ENCODE measurements at regions of chr12 and their contacts with region 1.

Region 1: GRCh38 chr12:19311165-19311564 is 128.1 kb upstream of the AEBP2 start:
- DNase-seq: no peak
- H3K4me3 Mint-ChIP-seq: no peak overlapping the region
- H3K27ac Mint-ChIP-seq: no peak overlapping the region
- H3K4me1 Mint-ChIP-seq: peaks cover 3% of the 10 kb centered on the region
- H3K27me3 Mint-ChIP-seq: no peaks in the 10 kb centered on the region
- CTCF ChIP-seq: no peak

Region 2: DNA sequence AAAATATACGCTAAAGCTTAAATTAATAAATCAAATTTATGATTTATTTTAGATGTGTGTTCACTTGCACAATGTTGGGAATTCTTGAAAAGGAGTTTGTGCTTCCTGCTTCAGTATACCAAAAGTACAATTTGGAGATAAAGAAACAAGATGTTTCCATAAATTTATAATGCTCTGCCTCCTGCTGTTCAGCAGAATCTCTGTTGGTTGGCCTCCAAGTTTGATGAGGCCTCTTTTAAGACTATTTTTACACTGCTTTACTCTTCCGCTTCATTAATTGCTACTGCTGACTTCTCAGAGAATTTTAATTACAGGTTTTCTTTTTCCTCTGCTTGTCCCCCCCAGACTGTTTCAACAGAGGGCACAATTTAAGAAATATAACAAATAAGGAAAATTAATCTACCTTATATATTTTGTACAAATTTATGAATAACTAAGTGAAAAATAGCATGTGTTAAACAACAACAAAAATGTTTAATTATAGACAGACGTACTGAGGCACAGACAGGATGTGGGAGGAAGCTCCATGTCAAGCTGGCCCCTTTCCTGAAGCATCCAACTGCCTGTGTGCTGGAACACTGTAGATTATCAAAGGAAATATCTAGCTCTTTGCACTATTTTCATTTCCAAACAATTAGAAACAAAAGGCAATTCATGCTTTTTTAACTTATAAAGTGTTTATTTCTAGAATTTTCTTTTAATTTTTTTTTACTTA is 966.0 kb before region 1 on chr12:
- CTCF ChIA-PET with region 1: no interaction called
- POLR2A ChIA-PET with region 1: no interaction called
- intact Hi-C with region 1: no loop called
- DNase-seq: no peak
- H3K4me3 Mint-ChIP-seq: no peak overlapping the region
- H3K27ac Mint-ChIP-seq: no peak overlapping the region
- H3K4me1 Mint-ChIP-seq: peaks cover 6% of the 10 kb centered on the region
- H3K27me3 Mint-ChIP-seq: no peaks in the 10 kb centered on the region
- CTCF ChIP-seq: no peak

Region 3: DNA sequence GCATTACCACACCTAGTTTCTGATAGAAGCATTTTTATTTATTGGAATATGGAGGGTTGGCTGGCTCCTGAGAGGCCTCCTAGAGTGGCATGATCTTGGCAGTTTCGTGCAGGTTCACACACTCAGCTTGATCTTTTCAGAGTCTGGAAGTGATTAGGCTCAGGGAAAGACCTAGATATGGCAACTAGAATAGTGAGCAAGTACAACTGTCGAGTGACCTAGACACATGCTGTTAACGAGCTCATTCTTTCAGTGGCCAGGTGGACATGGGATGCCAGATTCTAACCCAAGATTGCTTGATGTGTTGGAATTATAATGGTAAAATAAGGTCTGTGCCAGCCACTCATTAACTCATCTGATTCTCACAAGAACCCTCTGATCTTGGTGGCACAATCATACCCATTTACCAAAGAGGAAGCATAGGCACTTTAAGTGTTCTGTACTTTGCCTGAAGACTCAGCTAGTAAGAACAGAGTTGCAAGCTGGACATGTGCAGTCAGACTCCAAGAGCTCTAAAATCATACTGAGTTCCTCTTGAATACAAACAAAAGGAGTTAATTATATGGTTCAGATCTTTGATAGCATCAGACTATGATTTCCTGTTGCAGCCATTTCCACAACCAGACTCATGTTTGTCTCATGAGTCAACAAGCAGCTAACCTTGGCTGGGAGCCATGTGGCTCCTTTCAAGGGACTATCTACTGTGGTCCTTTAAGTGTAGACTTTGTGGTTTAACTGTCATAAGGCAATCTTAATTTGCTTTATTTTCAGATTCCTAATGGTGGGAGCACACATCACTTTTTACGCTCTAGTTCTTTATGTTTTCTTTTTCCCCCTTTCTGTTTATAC is 37.5 kb before region 1 on chr12:
- CTCF ChIA-PET with region 1: no interaction called
- POLR2A ChIA-PET with region 1: no interaction called
- intact Hi-C with region 1: no loop called
- DNase-seq: peak; percentile 95
- H3K4me3 Mint-ChIP-seq: no peak overlapping the region
- H3K27ac Mint-ChIP-seq: peak overlapping the region; percentile 27
- H3K4me1 Mint-ChIP-seq: peaks cover 21% of the 10 kb centered on the region
- H3K27me3 Mint-ChIP-seq: no peaks in the 10 kb centered on the region
- CTCF ChIP-seq: no peak

Region 4: GRCh38 chr12:19338405-19338804 is 27.2 kb after region 1 on chr12:
- CTCF ChIA-PET with region 1: no interaction called
- POLR2A ChIA-PET with region 1: interaction called, 10 read pairs
- intact Hi-C with region 1: no loop called
- DNase-seq: peak; percentile 8
- H3K4me3 Mint-ChIP-seq: no peak overlapping the region
- H3K27ac Mint-ChIP-seq: no peak overlapping the region
- H3K4me1 Mint-ChIP-seq: no peaks in the 10 kb centered on the region
- H3K27me3 Mint-ChIP-seq: no peaks in the 10 kb centered on the region
- CTCF ChIP-seq: no peak

Measured in MCF 10A (cell line).